Esophagus muscularis mucosa (tissue), 4 donors: ENCODE measurements at regions of chr18 and their contacts with region 1.

Region 1: GRCh38 chr18:3062798-3063680 is 50.1 kb upstream of the LPIN2 start:
- DNase-seq: peak; percentile 90
- H3K4me3 ChIP-seq: peak overlapping the region; percentile 9 to 35 (median 26)
- H3K27ac ChIP-seq: peak overlapping the region in 2 of 4 donors; percentile 13 to 20
- H3K4me1 ChIP-seq: peaks cover 10 to 36% (median 25%) of the 10 kb centered on the region in 4 donors
- H3K27me3 ChIP-seq: no peaks in the 10 kb centered on the region
- CTCF ChIP-seq: peak; percentile 72 to 77 (median 73)
- EP300 ChIP-seq: no peak
- POLR2A ChIP-seq: no peak

Region 2: DNA sequence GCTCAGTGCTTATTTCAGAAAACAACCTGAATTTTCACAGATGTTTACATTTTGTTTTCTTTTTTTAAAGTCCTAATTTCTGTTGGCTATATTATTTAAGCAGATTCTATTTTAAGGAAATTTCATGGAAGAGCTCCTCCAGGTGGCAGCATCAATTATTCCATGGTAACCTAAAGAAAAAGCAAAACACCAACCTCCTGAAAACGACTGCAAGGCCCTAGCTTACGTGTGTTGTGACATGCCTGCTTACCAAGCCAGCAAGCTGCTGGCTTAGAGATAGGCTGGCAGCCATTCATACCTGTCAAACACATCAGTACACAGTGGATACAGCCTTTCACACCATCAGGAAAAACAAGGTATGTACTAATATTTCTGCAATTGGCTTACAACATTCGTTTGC is 115.0 kb before region 1 on chr18:
- intact Hi-C with region 1: loop called (anchors 5 kb)
- DNase-seq: no peak
- H3K4me3 ChIP-seq: no peak overlapping the region
- H3K27ac ChIP-seq: no peak overlapping the region
- H3K4me1 ChIP-seq: peaks cover 2 to 11% (median 11%) of the 10 kb centered on the region in 4 donors
- H3K27me3 ChIP-seq: no peaks in the 10 kb centered on the region
- CTCF ChIP-seq: peak in 2 of 3 experiments; percentile 34 to 50
- EP300 ChIP-seq: no peak
- POLR2A ChIP-seq: no peak

Region 3: DNA sequence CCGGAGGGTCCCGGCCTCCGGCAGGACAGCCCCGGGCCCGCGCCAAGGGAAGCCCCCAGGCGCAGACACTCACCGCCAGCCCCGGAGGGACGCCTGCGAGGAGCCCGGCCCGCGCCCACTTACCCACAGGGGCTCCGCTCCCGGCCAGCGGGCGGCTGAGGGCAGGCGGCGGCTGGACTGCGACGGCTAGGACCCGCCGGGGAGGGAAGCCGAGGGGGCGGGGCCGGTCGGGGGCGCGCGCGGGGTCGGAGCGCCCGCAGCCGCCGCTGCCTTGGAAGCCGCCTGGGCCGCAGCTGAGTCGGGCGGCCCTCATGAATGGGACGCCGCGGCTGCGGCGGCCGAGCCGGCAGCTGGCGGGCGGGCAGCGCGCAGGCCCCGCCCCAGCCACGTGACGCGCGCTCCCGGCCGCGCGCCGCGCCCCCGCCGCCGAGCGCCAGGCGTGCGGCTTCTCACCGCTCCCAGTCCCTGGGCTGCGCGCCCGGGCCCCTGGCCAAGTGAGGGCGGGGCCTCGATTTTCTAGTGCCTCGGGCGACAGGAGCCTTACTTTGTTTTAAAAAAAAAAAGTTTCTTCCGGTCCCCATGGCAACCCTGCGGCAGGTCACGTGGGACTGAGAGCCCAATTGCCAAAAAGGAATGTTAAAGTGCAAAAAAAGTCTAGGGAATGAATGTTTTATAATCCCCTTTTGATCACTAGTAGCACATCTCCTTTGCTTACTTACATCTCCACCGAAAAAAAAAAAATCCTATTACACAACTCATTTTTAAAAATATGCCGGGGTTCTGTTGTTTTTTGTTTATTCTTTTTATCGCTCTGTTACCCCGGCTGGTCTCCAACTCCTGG is 49.9 kb before region 1 on chr18 and contains the start of gene LPIN2:
- intact Hi-C with region 1: loop called (anchors 5 kb)
- DNase-seq: peak; percentile 99
- H3K4me3 ChIP-seq: peak within 1 kb of the TSS; percentile 69 to 100 (median 88)
- H3K27ac ChIP-seq: peak within 1 kb of the TSS; percentile 97 to 99 (median 98)
- H3K4me1 ChIP-seq: peaks cover 30 to 74% (median 71%) of the 10 kb centered on the region in 4 donors
- H3K27me3 ChIP-seq: no peaks in the 10 kb centered on the region
- CTCF ChIP-seq: no peak
- EP300 ChIP-seq: no peak
- POLR2A ChIP-seq: no peak
- total RNA-seq, gene LPIN2: 15.4 to 26.9 (median 24.8) TPM

Region 4: DNA sequence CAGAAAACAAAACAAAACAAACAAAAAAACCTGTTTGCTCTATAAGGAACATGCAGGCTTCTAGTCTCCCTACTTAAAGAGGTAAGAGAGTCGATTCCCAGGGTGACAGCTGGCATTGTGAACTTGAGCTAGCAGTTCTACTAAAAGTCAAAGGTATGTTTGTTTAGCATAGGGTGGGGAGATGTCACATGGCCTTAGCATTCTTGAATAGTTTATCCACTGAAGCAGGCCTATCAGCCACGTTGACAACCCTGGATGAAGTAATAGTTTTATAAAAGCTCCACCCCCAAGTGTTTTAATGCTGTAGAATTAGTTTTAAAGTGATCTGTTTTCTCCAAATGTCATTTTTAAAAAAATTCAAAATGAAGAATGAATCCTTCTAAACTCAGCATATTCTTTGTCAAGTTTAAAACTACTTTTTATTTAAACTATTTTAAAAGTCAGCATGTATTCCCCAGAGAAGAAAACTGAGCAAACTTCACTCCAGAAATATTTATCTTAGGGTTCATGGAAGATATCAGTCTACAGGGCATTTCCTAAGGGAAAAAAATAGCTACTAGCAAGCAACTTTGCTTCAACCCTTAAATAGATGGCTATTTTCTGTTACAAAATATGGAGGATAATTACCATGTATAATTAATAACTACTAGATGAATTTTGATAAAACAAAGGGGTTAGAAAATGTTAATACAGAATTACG is 155.1 kb after region 1 on chr18:
- intact Hi-C with region 1: no loop called
- DNase-seq: peak; percentile 21
- H3K4me3 ChIP-seq: peak overlapping the region; percentile 37 to 57 (median 49)
- H3K27ac ChIP-seq: peak overlapping the region; percentile 76 to 82 (median 82)
- H3K4me1 ChIP-seq: peaks cover 12 to 40% (median 32%) of the 10 kb centered on the region in 4 donors
- H3K27me3 ChIP-seq: no peaks in the 10 kb centered on the region
- CTCF ChIP-seq: no peak
- EP300 ChIP-seq: no peak
- POLR2A ChIP-seq: no peak

Region 5: DNA sequence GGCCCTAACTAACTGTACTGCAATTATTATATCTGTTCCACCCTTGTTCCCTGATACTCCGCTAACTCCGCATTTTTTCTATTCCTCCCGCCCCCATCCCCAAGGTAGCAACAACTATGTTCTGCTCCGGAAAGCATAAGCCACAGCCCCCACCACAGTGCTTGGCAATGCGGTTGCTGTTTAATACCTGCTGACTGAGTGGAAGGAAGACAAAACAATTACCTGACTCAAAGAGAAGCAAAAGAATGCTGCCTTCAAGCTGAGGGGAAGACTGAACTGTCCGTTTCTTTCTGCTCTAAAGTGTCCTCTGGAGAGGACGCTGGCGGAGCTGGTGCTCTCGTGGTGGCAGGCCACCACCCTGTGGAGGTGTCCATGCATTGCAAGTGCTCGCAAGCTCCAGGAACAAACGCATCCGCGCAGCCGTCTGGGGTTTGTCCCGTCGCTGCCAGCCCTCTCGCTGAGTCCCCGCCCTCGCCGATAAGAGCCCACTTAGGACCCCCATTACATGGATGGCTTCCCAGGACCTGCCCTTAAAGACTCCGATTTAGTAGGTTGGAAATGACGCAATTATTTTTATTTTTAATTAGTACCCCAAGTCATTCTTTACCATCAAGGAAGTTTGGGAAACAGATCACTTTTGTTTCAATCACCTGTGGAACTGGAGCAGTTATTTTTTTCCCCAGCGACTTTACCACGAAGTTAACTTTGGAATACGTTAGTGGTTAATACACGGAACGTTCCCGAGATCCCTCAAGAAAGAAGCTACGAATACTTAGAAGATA is 183.0 kb after region 1 on chr18:
- intact Hi-C with region 1: loop called (anchors 10 kb)
- DNase-seq: peak; percentile 97
- H3K4me3 ChIP-seq: peak overlapping the region; percentile 87 to 98 (median 94)
- H3K27ac ChIP-seq: peak overlapping the region; percentile 99 to 100 (median 99)
- H3K4me1 ChIP-seq: peaks cover 18 to 55% (median 49%) of the 10 kb centered on the region in 4 donors
- H3K27me3 ChIP-seq: no peaks in the 10 kb centered on the region
- CTCF ChIP-seq: peak; percentile 95 to 99 (median 95)
- EP300 ChIP-seq: no peak
- POLR2A ChIP-seq: no peak

Region 6: GRCh38 chr18:3541549-3542386 is 478.7 kb after region 1 on chr18:
- intact Hi-C with region 1: no loop called
- DNase-seq: no peak
- H3K4me3 ChIP-seq: no peak overlapping the region
- H3K27ac ChIP-seq: no peak overlapping the region
- H3K4me1 ChIP-seq: peaks cover 0 to 13% (median 6%) of the 10 kb centered on the region in 4 donors
- H3K27me3 ChIP-seq: no peaks in the 10 kb centered on the region
- CTCF ChIP-seq: no peak
- EP300 ChIP-seq: no peak
- POLR2A ChIP-seq: no peak